WTC11 (cell line): ENCODE measurements at regions of chr9 and their contacts with region 1.

Region 1: GRCh38 chr9:22119537-22120158 is 110.5 kb upstream of the CDKN2B start:
- DNase-seq: no peak
- ATAC-seq: peak; percentile 69
- H3K4me3 Mint-ChIP-seq: no peak overlapping the region
- H3K27ac Mint-ChIP-seq: no peak overlapping the region
- H3K4me1 Mint-ChIP-seq: peaks cover 19% of the 10 kb centered on the region
- H3K27me3 Mint-ChIP-seq: no peaks in the 10 kb centered on the region; the same call in 1 of the 2 replicates
- CTCF ChIP-seq: no peak

Region 2: DNA sequence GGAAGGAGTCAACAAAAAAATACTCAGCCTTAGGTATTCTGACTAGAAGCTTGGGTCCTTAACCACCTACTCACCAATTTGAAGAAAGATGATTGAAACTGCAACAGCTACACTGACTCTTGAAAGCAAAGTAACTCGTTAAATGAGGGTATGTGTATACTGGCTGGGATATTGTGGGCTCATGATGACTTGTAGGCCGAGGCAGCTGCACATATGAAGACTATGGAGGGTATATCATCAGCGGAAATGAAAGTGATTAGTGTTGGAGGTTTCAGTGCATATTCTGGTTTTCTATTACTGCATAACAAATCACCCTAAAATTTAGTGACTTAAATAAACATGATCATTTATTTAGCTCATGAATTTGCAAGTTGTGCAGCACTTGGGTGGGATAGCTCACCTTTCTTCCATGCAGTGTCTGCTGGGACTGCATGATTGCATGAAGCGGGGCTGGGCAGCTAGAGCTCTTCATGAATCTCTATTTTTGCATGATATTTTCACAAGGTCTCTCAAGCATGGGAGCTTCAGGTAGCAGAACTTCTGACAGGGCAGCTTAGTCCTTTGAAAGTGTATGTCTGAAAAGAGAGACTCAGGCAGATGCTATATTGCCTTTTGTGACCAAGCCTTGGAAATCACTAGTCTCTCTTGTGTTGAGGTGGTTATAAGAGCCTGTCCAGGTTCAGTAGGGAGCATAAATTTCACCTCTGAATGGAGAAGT is 14.5 kb before region 1 on chr9:
- CTCF ChIA-PET with region 1: interaction called, 12 read pairs
- POLR2A ChIA-PET with region 1: interaction called, 3 read pairs
- DNase-seq: no peak
- ATAC-seq: no peak
- H3K4me3 Mint-ChIP-seq: no peak overlapping the region
- H3K27ac Mint-ChIP-seq: no peak overlapping the region
- H3K4me1 Mint-ChIP-seq: peaks cover 22% of the 10 kb centered on the region
- H3K27me3 Mint-ChIP-seq: no peaks in the 10 kb centered on the region
- CTCF ChIP-seq: no peak